ENCODE measurements at regions of chr6 and their contacts with region 1.

Region 1: DNA sequence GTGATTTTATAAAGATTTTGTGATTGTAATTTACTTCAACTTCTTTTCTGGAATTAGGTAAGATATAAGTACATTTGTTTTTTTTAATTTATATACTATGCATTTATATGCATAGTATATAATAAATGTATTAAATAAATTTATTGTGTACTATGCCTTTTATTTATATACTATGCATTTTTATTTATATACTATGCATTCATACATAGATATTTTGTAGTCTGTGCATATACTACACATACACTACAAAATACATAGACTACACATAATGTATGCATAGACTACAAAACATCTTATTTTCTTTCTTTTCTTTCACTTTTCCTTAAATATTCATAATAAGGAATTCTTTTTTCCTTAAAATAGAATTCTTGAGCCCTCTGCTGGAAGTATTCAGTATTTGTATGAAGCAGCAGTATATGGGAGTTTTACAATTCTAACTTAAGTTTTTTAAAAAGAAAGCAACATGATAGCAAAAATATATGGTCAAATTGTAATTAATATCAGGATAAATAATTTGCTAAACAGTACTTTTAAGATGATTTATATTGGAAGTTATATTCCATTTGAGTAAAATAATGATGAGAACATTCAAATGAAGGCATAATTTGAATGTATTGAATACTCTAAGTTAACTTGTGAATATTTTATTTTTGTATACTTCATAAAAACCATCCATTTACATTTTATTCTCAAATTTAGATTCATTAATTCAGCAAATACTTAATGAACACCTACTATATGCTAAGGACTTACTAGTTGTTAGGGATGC is 129.3 kb downstream of the KLHL32 start:
- DNase-seq: no peak
- H3K4me3 ChIP-seq: no peak overlapping the region
- H3K4me3 Mint-ChIP-seq: no peak overlapping the region
- H3K27ac Mint-ChIP-seq: no peak overlapping the region
- H3K4me1 ChIP-seq: no peaks in the 10 kb centered on the region
- H3K4me1 Mint-ChIP-seq: no peaks in the 10 kb centered on the region
- H3K27me3 ChIP-seq: no peaks in the 10 kb centered on the region
- H3K27me3 Mint-ChIP-seq: peaks cover 13% of the 10 kb centered on the region
- CTCF ChIP-seq: peak; percentile 40 to 48

Region 2: DNA sequence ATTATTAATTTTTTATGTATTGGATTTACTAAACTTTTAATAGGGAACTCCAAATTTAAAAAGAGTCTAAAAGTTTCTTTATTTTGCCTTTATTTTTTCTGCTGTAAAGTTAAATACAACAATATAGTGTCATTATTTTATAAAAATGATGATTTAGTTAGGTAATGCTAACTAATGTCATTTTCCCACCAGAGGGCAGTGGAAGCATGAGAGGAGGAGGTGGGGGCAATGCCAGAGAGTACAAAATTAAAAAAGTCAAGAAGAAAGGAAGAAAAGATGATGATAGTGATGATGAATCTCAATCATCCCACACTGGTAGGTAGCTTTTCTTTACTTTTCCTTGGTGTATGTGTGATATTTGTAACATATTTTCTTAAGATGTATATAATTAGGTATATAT is 511.1 kb before region 1 on chr6:
- CTCF ChIA-PET with region 1: no interaction called
- POLR2A ChIA-PET with region 1: no interaction called
- intact Hi-C with region 1: loop called (anchors 5 kb)
- DNase-seq: peak in 1 of 2 experiments; percentile 3
- H3K4me3 ChIP-seq: no peak overlapping the region
- H3K4me3 Mint-ChIP-seq: no peak overlapping the region
- H3K27ac Mint-ChIP-seq: no peak overlapping the region
- H3K4me1 ChIP-seq: no peaks in the 10 kb centered on the region
- H3K4me1 Mint-ChIP-seq: no peaks in the 10 kb centered on the region
- H3K27me3 ChIP-seq: no peaks in the 10 kb centered on the region
- H3K27me3 Mint-ChIP-seq: no peaks in the 10 kb centered on the region
- CTCF ChIP-seq: peak in 1 of 2 experiments; percentile 24

Region 3: DNA sequence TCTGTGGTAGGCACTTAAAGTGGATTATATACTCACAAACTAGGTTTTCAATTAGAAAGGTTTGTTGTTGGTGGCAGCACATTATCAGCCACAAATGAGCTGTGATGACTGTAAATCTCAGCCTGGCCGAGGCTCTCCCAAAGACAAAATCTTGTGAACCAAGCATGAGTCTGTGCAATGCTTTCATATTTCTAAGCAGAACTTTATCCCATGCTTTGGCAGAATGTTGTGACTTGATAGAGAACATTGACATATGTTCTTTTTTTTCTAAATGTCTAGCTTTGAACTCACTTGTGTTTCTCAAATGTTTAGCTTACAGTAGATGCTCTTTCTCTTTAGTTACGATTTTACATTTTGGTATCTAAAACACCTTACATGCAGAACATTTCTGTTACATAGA is 23.4 kb before region 1 on chr6:
- CTCF ChIA-PET with region 1: no interaction called
- POLR2A ChIA-PET with region 1: no interaction called
- intact Hi-C with region 1: loop called (anchors 2 kb)
- DNase-seq: no peak
- H3K4me3 ChIP-seq: no peak overlapping the region
- H3K4me3 Mint-ChIP-seq: no peak overlapping the region
- H3K27ac Mint-ChIP-seq: no peak overlapping the region
- H3K4me1 ChIP-seq: no peaks in the 10 kb centered on the region
- H3K4me1 Mint-ChIP-seq: no peaks in the 10 kb centered on the region
- H3K27me3 ChIP-seq: no peaks in the 10 kb centered on the region
- H3K27me3 Mint-ChIP-seq: peaks cover 4% of the 10 kb centered on the region
- CTCF ChIP-seq: no peak

Measured in Caco-2 (cell line).